Activated CD4-positive, alpha-beta T cell treated with anti-CD3 and anti-CD28 coated beads for 36 hours (primary cell): ENCODE measurements at regions of chr10 and their contacts with region 1.

Region 1: GRCh38 chr10:83182076-83182475 is 957.2 kb upstream of the GHITM start:
- DNase-seq: no peak
- ATAC-seq: no peak
- H3K4me3 Mint-ChIP-seq: no peak overlapping the region
- H3K27ac Mint-ChIP-seq: no peak overlapping the region
- H3K4me1 Mint-ChIP-seq: no peaks in the 10 kb centered on the region
- H3K27me3 Mint-ChIP-seq: no peaks in the 10 kb centered on the region

Region 2: GRCh38 chr10:83193026-83193425 is 10.9 kb after region 1 on chr10:
- CTCF ChIA-PET with region 1: interaction called, 3 read pairs
- POLR2A ChIA-PET with region 1: no interaction called
- intact Hi-C with region 1: loop called in 1 of 2 experiments (anchors 1 kb)
- DNase-seq: no peak
- ATAC-seq: no peak
- H3K4me3 Mint-ChIP-seq: no peak overlapping the region
- H3K27ac Mint-ChIP-seq: no peak overlapping the region
- H3K4me1 Mint-ChIP-seq: no peaks in the 10 kb centered on the region
- H3K27me3 Mint-ChIP-seq: no peaks in the 10 kb centered on the region

Region 3: DNA sequence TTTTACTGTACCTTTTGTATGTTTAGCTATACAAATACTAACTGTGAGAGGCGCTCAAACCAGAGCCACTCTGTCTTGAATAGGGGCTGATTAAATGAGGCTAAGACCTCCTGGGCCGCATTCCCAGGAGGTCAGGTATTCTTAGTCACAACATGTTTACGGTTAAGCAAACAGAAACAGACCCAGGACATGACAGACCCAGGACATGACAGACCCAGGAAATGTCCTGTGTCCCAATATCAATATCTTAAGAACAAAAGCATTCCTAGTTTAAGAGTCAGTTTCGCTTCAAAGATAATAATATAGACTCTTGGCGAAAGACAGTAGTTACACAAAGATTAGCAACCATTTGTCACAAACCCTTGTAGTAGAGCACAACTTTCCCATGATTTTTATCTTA is 1450.8 kb after region 1 on chr10:
- CTCF ChIA-PET with region 1: no interaction called
- POLR2A ChIA-PET with region 1: no interaction called
- intact Hi-C with region 1: no loop called
- DNase-seq: no peak
- ATAC-seq: no peak
- H3K4me3 Mint-ChIP-seq: no peak overlapping the region
- H3K27ac Mint-ChIP-seq: no peak overlapping the region
- H3K4me1 Mint-ChIP-seq: no peaks in the 10 kb centered on the region
- H3K27me3 Mint-ChIP-seq: peaks cover 3% of the 10 kb centered on the region